ENCODE measurements at regions of chr5 and their contacts with region 1.

Region 1: DNA sequence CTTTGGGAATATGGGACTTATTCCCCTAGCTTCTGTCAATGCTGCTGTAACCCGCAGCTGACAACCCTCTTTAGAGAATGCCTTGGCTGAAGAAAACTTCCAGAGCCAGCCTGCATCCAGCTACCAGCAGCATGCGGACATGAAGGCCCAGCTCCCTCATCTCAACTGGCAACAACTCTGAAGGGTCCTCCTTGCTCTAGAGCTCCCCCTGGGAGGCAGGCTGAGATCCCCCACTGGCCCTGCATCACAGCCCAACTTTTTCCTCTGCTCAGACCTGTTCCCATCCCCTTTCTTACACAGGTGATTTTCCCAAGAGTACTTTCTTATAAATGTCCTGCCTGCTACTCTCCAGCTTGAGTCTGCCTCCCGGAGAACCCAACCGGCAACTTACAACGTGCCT is 18.7 kb upstream of the WNT8A start:
- DNase-seq: peak; percentile 23 to 36 (median 24)
- H3K4me3 ChIP-seq: no peak overlapping the region
- H3K27ac ChIP-seq: no peak overlapping the region
- H3K4me1 ChIP-seq: peaks cover 0 to 4% (median 0%) of the 10 kb centered on the region in 4 experiments
- H3K27me3 ChIP-seq: no peaks in the 10 kb centered on the region

Region 2: GRCh38 chr5:137629646-137630045 is 435.5 kb before region 1 on chr5:
- CTCF ChIA-PET with region 1: interaction called, 11 read pairs
- POLR2A ChIA-PET with region 1: no interaction called
- DNase-seq: peak; percentile 52 to 78 (median 72)
- H3K4me3 ChIP-seq: peak overlapping the region in 1 of 7 experiments; percentile 67
- H3K27ac ChIP-seq: no peak overlapping the region
- H3K4me1 ChIP-seq: peaks cover 0 to 10% (median 5%) of the 10 kb centered on the region in 4 experiments
- H3K27me3 ChIP-seq: no peaks in the 10 kb centered on the region

Region 3: GRCh38 chr5:137778772-137779564 is 286.1 kb before region 1 on chr5:
- CTCF ChIA-PET with region 1: interaction called, 11 read pairs
- POLR2A ChIA-PET with region 1: no interaction called
- DNase-seq: peak; percentile 40 to 64 (median 52)
- H3K4me3 ChIP-seq: no peak overlapping the region
- H3K27ac ChIP-seq: no peak overlapping the region
- H3K4me1 ChIP-seq: peaks cover 0 to 4% (median 0%) of the 10 kb centered on the region in 4 experiments
- H3K27me3 ChIP-seq: no peaks in the 10 kb centered on the region

Region 4: DNA sequence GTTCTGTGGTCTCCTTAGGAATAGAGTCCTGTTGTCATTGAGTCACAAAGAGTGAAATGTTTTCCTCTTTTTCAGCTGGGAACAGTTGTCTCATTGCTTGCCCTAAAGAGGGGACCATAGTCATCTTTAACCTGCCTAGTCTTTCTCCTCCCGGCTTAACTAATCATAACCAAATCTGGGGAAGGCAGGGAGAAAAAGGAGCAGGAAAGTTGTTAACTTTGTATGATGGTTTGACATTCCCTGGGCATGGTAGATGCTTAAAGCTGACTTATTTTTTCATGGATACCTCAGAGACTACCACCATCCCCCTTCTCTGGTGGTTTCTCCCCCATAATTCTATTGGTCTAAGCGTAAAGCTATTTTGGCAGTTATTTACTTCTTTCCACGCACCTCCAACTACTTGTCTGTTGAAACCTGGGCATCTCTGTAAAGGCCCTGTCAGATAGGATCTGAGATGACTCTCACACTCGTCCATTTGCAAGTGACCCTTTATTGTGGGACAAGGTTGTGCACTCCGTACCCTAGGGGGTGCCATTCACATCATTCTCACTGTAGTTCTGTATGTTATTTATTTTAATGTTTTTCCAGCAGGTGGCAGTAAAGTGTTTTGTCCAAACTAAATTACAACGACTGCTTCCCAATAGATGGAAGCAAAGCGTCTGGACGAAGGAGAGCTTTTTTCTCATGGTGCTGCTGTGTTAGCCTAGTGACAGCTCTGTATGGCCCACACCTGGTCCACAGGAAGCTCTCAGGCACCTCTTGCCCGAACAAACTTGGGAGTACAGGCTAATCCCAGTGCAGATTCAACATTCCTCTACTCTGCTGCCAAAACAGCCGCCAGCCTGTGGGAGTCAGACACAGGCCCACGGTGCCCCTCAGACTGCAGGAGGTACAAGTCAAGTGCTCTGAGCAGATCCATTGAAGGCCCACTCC is 29.2 kb before region 1 on chr5:
- CTCF ChIA-PET with region 1: interaction called, 274 read pairs
- POLR2A ChIA-PET with region 1: no interaction called
- DNase-seq: peak; percentile 92 to 95 (median 93)
- H3K4me3 ChIP-seq: no peak overlapping the region
- H3K27ac ChIP-seq: no peak overlapping the region
- H3K4me1 ChIP-seq: peaks cover 4 to 30% (median 17%) of the 10 kb centered on the region in 4 experiments
- H3K27me3 ChIP-seq: no peaks in the 10 kb centered on the region

Region 5: GRCh38 chr5:138054847-138055558 is 10.1 kb before region 1 on chr5:
- CTCF ChIA-PET with region 1: interaction called, 20 read pairs
- POLR2A ChIA-PET with region 1: no interaction called
- DNase-seq: peak in 1 of 3 donors; percentile 21
- H3K4me3 ChIP-seq: no peak overlapping the region
- H3K27ac ChIP-seq: no peak overlapping the region
- H3K4me1 ChIP-seq: no peaks in the 10 kb centered on the region
- H3K27me3 ChIP-seq: peaks cover 0 to 2% (median 0%) of the 10 kb centered on the region in 5 experiments

Region 6: GRCh38 chr5:138077065-138077696 is 12.1 kb after region 1 on chr5:
- CTCF ChIA-PET with region 1: interaction called, 21 read pairs
- POLR2A ChIA-PET with region 1: no interaction called
- DNase-seq: peak; percentile 51 to 72 (median 65)
- H3K4me3 ChIP-seq: no peak overlapping the region
- H3K27ac ChIP-seq: no peak overlapping the region
- H3K4me1 ChIP-seq: peaks cover 0 to 7% (median 2%) of the 10 kb centered on the region in 4 experiments
- H3K27me3 ChIP-seq: no peaks in the 10 kb centered on the region

Region 7: DNA sequence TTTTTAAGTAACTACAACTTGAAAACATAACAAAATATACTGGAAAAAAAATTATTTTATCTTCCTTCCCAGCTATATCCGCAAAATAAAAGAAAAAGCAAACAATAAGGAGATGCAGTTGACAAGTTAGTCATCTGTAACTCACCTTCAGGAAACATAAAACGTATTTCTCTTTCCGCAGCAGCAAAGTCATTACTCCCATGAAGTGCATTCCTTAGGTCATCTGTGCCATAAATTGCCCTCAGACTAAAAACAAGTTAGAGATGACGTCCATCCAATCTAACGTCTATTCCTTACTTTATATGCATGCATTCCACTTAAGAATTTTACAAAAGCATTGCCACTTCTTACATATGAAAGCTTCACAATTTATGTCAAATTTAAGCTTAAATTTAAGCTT is 63.2 kb after region 1 on chr5:
- CTCF ChIA-PET with region 1: interaction called, 16 read pairs
- POLR2A ChIA-PET with region 1: no interaction called
- DNase-seq: peak; percentile 18 to 77 (median 52)
- H3K4me3 ChIP-seq: no peak overlapping the region
- H3K27ac ChIP-seq: peak overlapping the region in 1 of 2 experiments; percentile 71
- H3K4me1 ChIP-seq: peaks cover 0 to 3% (median 0%) of the 10 kb centered on the region in 4 experiments
- H3K27me3 ChIP-seq: no peaks in the 10 kb centered on the region

Measured in common myeloid progenitor, CD34-positive (primary cell).